ENCODE measurements at regions of chr14 and their contacts with region 1.

Region 1: GRCh38 chr14:48690349-48690748 is 895.8 kb downstream of the RPS29 start:
- DNase-seq: no peak
- H3K4me3 ChIP-seq: no peak overlapping the region
- H3K27ac ChIP-seq: no peak overlapping the region
- H3K4me1 ChIP-seq: no peaks in the 10 kb centered on the region
- H3K27me3 ChIP-seq: no peaks in the 10 kb centered on the region
- CTCF ChIP-seq: no peak
- POLR2A ChIP-seq: no peak

Region 2: DNA sequence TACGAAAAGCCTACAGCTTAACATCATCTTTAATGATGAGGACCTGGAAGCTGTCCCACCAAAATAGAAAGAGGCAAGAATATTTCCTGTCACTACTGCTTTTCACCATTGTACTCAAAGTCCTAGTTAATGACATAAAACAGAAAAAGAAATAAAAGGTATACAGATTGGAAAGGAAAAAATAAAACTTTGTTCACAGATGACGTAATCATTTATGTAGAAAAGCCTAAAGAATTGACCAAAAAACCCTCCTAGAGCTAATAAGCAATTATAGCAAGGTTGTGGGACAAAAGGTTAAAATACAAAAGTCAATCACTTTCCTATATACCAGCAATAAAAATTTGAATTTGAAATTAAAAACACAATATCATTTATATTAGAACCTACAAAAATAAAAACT is 917.7 kb before region 1 on chr14:
- intact Hi-C with region 1: loop called (anchors 5 kb)
- DNase-seq: no peak
- H3K4me3 ChIP-seq: no peak overlapping the region
- H3K27ac ChIP-seq: no peak overlapping the region
- H3K4me1 ChIP-seq: no peaks in the 10 kb centered on the region
- H3K27me3 ChIP-seq: no peaks in the 10 kb centered on the region
- CTCF ChIP-seq: no peak
- POLR2A ChIP-seq: no peak

Region 3: DNA sequence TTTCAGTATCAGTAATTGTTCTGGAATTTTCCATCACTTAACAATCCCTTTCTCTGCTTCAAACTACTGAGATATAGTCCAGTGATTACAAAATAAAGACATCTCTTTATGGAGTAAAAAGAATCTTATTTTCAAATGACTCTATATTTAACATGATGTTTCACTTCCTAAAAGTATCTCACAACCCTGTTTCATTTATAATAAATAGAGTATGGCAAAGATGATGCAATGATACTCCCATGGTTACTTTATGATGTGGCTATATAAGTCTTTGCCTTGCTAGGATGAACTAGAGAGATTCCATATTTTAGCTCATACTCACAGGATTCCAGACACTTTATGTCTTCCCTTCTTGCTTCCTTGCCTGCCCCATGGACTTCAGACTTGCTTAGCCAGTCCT is 61.5 kb before region 1 on chr14:
- intact Hi-C with region 1: no loop called
- DNase-seq: no peak
- H3K4me3 ChIP-seq: no peak overlapping the region
- H3K27ac ChIP-seq: no peak overlapping the region
- H3K4me1 ChIP-seq: no peaks in the 10 kb centered on the region
- H3K27me3 ChIP-seq: no peaks in the 10 kb centered on the region
- CTCF ChIP-seq: no peak
- POLR2A ChIP-seq: no peak

Region 4: GRCh38 chr14:49727171-49727570 is 1036.8 kb after region 1 on chr14:
- intact Hi-C with region 1: loop called (anchors 10 kb)
- DNase-seq: no peak
- H3K4me3 ChIP-seq: no peak overlapping the region
- H3K27ac ChIP-seq: no peak overlapping the region
- H3K4me1 ChIP-seq: no peaks in the 10 kb centered on the region
- H3K27me3 ChIP-seq: no peaks in the 10 kb centered on the region
- CTCF ChIP-seq: no peak
- POLR2A ChIP-seq: no peak